ENCODE measurements at regions of chr1 and their contacts with region 1.

Region 1: DNA sequence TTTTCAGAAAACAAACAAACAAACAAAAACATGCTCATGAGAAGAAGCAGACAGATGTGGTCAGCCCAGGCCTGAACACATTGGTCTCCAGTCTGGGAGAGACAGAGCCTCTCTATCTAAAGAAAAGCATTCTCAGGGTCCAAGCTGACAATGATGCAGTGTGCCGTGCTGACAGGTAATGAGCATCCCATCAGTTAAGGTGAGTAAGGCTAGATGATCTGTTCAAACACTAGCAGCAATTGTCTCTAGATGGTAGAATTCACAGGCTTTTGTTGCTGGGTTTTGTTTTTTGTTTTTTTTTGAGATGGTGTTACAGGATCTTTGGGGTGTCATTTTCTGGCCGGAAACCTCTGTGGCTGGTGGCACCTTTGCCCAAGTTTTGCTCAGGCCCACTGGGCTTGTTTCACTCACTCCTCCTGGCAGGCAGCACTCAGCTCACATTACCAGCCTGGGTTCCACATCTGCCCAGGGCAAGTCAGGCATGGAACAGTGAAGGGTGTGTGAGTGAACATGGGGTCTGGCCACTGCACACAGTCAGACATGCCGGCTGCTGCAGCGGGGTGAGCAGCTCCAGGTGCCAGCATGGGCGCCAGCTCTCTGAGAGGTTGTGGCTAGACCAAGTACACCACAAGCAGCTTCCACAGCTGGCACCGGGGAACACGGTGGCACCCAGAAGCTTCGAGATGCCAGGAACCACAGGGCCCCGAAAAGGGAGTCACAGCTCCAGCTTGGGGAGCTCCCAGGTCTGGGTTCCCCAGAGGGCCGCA is 2.5 kb upstream of the C1QA start:
- DNase-seq: peak in 1 of 2 donors; percentile 38
- ATAC-seq: no peak
- H3K4me3 ChIP-seq: no peak overlapping the region
- H3K27ac ChIP-seq: no peak overlapping the region
- H3K4me1 ChIP-seq: no peaks in the 10 kb centered on the region
- H3K27me3 ChIP-seq: peaks cover 0 to 32% (median 3%) of the 10 kb centered on the region in 3 donors
- CTCF ChIP-seq: no peak

Region 2: DNA sequence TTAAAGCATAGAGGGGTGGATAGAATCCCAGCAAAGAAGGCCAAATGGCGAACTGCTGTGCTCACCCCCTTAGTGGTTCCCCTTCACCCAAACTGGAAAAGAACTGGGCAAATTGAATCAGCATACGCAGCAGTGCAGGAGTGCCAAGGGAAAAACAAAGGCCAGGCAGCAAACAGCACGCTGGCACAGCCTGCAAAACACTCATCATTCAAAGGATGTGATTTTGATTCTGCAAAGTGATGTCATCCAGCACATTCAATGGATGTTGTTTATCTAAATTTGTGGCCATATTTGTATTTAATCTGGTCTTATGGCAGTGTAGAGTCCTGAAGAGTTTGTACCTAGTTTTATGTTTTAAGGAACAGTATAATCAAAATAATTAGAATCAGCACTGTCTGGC is 1271.8 kb before region 1 on chr1:
- intact Hi-C with region 1: loop called in 1 of 2 experiments (anchors 5 kb)
- DNase-seq: no peak
- ATAC-seq: no peak
- H3K4me3 ChIP-seq: no peak overlapping the region
- H3K27ac ChIP-seq: no peak overlapping the region
- H3K4me1 ChIP-seq: no peaks in the 10 kb centered on the region
- H3K27me3 ChIP-seq: no peaks in the 10 kb centered on the region
- CTCF ChIP-seq: no peak

Region 3: GRCh38 chr1:22289307-22289995 is 344.4 kb before region 1 on chr1:
- intact Hi-C with region 1: no loop called
- DNase-seq: no peak
- ATAC-seq: no peak
- H3K4me3 ChIP-seq: no peak overlapping the region
- H3K27ac ChIP-seq: no peak overlapping the region
- H3K4me1 ChIP-seq: no peaks in the 10 kb centered on the region
- H3K27me3 ChIP-seq: peaks cover 0 to 35% (median 5%) of the 10 kb centered on the region in 3 donors
- CTCF ChIP-seq: no peak